ENCODE measurements at regions of chr11 and their contacts with region 1.

Region 1: DNA sequence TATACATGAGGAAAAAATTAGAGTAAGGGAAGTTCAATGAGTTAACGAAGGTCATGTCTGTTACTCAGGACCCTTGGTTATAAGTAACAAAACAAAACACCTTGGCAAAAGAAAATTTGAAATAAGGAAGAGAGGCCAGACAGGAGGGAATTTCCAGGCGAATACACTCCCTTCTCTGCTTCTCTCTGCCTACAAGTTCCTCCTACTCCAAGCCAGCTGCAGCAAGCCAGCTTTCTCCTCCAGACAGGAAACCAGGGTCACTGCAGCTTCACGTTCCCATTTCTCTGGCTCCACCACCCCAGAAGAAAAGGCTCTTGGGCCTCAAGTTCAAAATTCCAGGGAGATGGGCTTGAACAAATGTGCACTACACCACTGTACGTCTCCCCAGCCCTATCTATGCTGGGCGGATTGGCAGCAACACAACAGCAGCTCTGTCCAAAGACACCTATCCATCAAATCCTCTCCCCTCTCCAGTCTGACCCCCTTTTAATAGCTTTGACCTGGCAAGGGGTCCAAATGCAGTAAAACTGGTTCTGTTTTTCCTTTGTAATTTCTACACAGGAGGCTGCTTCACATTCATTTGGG is 27.7 kb downstream of the SMCO4 start:
- DNase-seq: no peak

Region 2: DNA sequence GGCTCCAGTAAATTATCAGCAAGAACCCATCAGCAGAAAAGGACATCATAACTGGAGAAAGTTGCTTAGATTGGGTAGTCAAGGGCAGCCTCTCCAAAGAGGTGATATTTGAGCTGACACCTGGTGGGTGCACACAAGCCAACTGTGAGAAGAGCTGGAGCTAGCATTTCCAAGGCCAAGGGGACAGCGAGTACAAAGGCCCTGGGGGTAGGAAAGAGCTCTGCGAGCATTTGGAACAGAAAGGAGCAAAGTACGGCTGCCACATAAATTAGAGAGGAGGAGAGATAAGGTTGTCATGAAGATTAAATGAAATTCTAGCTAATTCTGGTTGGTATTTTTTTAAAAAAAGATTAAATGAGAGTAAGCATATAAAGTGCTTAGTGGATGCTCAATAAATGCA is 49.4 kb after region 1 on chr11:
- intact Hi-C with region 1: loop called in 1 of 2 experiments (anchors 2 kb)
- DNase-seq: no peak